ENCODE measurements at regions of chr19 and their contacts with region 1.

Region 1: DNA sequence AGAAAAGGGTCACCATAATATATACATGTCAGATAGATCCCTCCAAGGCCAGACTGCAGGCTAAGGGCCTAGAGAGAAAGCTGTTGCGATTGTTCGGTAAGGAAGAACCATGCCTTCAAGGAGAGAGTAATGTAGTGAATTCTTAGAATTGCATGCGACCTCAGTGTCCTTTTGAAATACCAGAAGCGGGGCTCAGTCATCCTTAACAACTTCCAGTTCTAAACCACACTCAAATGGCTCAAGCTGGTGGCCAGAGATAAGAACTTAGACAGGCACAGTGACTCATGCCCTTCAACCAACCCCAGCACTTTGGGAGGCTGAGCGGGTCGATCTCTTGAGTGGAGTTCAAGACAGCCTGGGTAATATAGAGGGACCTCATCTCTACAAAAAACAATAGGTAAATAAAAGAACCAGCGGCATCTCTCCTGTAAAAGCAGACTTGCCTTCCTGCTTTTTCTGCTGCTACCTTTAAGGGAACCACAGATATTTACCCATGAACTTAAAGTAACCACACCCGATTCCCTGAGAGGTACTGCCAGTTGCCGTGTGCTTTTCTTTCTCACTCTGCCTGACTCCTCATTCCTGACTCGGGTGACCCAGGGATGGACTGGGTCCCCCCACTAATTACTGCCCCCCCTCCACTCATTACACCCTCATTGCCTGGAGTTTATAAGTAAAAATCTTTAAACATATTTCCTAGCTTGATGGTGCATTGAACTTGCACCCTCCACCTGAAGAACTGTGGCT is 15.4 kb upstream of the SIGLEC6 start:
- DNase-seq: no peak
- H3K4me3 Mint-ChIP-seq: peak overlapping the region; percentile 28
- H3K27ac Mint-ChIP-seq: peak overlapping the region; percentile 64
- H3K4me1 Mint-ChIP-seq: peaks cover 58% of the 10 kb centered on the region
- H3K27me3 Mint-ChIP-seq: peaks cover 9% of the 10 kb centered on the region

Region 2: DNA sequence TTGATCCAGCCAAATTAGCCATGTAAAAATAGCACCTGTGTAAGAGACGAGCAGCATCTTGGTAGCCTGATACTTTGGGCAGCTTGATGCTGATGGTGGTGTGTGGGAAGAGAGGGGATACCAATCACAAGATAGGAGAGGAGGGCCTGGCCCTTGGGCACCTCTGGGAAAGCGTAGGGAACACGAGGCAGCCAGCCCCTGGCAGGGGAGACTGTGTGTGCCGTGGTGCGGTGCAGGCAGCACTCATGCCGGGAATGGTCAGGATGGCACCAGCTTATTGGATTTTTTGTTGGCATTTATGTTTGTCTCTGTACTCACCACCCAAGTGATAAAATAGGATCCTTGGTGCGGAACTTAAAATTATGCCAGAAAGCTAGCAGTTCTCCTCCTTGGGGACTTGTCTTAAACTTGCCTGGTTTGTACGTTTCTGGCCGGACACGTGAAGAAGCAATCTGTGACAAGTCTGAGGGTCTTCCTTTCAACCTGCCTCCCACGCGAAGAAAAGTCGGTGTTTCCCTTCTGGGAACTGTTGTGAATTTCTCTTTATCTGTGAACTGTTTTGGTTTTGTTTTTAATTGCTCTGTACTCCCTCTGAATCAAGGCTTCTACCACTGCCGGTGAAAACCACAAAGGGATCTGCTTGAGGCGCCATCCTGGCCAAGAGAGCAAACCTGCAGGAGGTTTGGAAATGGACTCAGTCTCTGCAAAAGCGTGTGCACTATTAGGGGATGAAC is 98.6 kb before region 1 on chr19:
- intact Hi-C with region 1: loop called (anchors 1 kb)
- DNase-seq: peak; percentile 39
- H3K4me3 Mint-ChIP-seq: peak overlapping the region; percentile 37
- H3K27ac Mint-ChIP-seq: peak overlapping the region; percentile 73
- H3K4me1 Mint-ChIP-seq: peaks cover 53% of the 10 kb centered on the region
- H3K27me3 Mint-ChIP-seq: no peaks in the 10 kb centered on the region

Region 3: DNA sequence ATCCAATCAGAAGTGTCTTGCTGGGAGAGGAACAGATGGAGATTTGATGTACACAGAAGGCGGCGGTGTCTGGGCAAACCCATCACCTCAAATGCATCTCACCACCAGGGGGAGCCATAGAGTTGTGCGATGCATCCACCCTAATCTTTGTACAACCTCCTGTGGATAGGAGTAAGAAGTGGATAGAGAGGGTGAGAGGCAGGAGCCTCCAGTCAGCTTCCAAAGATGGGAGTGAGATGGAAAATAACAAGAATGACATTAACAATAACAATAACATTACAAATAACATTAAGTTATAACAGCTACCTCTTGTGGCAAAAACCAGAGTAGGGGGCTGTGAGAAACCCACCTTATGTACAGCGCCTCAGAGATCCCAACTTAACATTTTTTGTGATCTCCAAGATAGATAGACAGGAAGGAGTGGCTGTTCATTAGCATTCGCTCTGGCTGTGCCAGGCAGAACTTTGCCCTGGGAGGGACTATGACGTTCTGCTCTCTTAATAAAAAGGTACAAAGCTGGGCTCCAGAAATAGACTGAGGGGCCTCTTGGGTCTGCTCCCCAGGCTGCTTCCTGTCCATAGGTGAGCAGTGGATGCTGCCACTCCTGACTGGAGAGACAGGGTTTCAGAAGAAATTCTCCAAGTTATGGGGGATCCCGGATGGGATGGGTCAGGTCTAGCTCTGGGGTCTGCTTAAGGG is 73.7 kb before region 1 on chr19:
- intact Hi-C with region 1: loop called (anchors 2 kb)
- DNase-seq: peak; percentile 67
- H3K4me3 Mint-ChIP-seq: no peak overlapping the region
- H3K27ac Mint-ChIP-seq: peak overlapping the region; percentile 29
- H3K4me1 Mint-ChIP-seq: peaks cover 37% of the 10 kb centered on the region
- H3K27me3 Mint-ChIP-seq: no peaks in the 10 kb centered on the region

Region 4: DNA sequence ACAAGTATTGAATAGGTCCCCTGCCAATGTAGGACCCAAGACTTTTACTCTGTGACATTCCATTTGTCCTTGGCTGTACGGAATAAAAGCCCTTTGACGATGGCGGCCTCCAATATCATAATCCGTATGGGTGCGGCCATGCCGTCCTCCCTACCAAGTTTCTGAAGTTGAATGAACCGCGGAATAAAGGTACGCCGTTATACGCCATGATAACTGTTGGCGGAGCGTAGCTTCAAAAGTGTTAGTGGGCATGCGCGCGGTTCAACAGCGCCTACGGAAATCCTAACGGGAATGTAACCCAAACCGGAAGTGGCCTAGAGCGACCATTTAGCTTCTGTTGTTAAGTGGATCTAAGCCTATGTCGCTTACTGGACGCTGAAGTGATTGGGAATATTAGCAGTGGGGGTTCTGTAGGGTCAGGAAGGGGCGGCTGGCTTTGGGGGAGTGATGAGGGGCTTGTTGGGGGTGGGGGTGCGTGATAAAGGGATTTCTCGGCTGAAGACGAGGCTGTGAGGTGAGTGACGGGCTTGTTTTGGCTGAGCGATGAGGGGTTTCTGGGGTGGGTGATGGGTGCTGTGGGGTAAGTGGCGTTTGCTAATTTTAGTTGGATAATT is 24.2 kb after region 1 on chr19 and contains the start of gene ZNF175:
- intact Hi-C with region 1: loop called (anchors 2 kb)
- DNase-seq: peak; percentile 71
- H3K4me3 Mint-ChIP-seq: peak within 1 kb of the TSS; percentile 97
- H3K27ac Mint-ChIP-seq: peak within 1 kb of the TSS; percentile 53
- H3K4me1 Mint-ChIP-seq: peaks cover 25% of the 10 kb centered on the region
- H3K27me3 Mint-ChIP-seq: peaks cover 13% of the 10 kb centered on the region
- total RNA-seq, gene ZNF175: 11.0 and 13.4 TPM in 2 replicates

Region 5: DNA sequence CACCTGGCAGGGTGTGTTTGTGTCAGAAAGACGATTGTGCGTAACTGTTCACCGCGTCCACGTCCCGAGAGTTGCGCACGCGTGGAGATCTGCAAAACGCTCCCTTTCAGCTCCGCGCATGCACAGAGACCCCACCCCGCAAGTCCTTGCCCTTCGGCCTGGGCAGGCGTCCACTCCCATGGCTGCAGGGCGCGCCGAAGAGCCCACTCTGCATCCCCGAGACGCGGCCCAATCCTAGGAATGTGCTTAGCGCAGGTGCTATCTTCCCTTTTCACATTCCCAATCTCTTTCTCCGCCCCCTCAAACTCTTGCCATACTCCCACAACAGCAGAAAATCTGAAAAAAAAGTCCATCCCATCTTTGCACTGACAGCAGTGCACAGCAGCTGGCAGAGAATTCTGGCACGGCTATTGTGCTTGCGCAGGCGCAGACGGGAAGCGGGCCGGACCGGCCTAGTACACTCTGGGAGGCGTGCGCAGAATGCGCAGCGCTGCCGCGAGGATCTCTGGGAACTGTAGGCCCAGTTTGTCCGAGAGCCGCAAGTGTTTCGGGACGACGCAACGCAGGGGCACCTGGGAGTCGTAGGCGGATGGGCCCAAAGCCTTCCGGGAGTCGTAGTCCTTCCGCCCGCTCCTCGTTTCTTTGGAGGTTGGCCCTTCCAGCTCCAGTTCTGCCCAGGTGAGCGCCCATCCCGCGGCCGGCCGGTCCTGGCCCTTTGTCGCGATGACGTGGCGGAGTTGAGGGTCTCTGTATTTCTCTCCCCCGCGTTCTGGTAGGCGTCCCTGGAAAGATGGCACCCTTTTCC is 47.3 kb after region 1 on chr19:
- intact Hi-C with region 1: loop called (anchors 2 kb)
- DNase-seq: peak; percentile 95
- H3K4me3 Mint-ChIP-seq: peak overlapping the region; percentile 89
- H3K27ac Mint-ChIP-seq: peak overlapping the region; percentile 80
- H3K4me1 Mint-ChIP-seq: peaks cover 20% of the 10 kb centered on the region
- H3K27me3 Mint-ChIP-seq: peaks cover 6% of the 10 kb centered on the region

Region 6: GRCh38 chr19:51607920-51608562 is 61.2 kb after region 1 on chr19:
- intact Hi-C with region 1: loop called (anchors 2 kb)
- DNase-seq: peak; percentile 65
- H3K4me3 Mint-ChIP-seq: no peak overlapping the region
- H3K27ac Mint-ChIP-seq: no peak overlapping the region
- H3K4me1 Mint-ChIP-seq: peaks cover 20% of the 10 kb centered on the region
- H3K27me3 Mint-ChIP-seq: peaks cover 3% of the 10 kb centered on the region